Dorsolateral prefrontal cortex (tissue), 120 donors: ENCODE measurements at regions of chr2 and their contacts with region 1.

Region 1: DNA sequence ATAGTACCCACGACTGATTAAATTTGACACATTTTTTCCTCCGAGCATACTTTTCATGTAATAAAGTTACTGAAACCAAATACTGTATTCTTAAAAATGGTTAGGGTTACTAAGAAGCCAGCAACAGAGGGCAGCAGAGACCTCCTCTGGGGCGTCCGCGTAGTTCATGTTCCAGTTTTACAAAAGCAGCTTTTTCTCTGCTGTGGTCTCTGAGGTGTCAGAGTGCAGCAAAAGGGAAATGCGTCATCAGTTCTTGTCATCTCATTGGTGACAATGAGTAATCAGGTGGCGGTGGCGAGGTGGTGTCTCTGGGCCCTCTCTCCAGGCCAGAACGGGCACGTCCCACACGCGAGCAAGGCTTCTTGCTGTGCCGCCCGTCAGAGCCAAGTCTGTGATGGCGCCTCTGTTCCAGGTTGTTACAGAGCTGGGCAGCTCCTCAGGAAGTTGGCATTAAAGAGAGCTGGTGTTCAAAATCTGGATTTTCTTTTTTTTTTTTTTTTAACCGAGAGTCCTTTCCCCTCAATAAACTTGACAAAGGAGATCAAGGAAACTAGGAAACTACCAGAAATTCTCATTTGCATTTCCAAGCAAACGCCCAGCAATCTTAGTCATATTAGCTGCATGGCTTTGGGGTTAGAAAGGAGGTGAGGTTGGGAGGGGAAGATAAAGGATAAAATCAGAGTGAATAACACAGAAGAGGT is 98.6 kb upstream of the BZW1 start:
- DNase-seq: peak; percentile 55 to 92 (median 86)
- H3K4me3 ChIP-seq: peak overlapping the region; percentile 23 to 70 (median 52)
- H3K27ac ChIP-seq: peak overlapping the region; percentile 47 to 97 (median 88)
- H3K27me3 ChIP-seq: no peaks in the 10 kb centered on the region
- CTCF ChIP-seq: peak; percentile 81 to 98 (median 91)

Region 2: GRCh38 chr2:200525882-200526651 is 187.1 kb before region 1 on chr2 and contains the start of gene SGO2:
- intact Hi-C with region 1: loop called (anchors 10 kb)
- DNase-seq: peak; percentile 87 to 97 (median 95)
- H3K4me3 ChIP-seq: peak within 1 kb of the TSS; percentile 66 to 100 (median 84)
- H3K27ac ChIP-seq: peak within 1 kb of the TSS in 44 of 59 donors; percentile 0 to 84 (median 62)
- H3K27me3 ChIP-seq: no peaks in the 10 kb centered on the region
- CTCF ChIP-seq: peak in 37 of 56 donors; percentile 7 to 59 (median 30)
- total RNA-seq, gene SGO2: 1.7 to 6.1 (median 3.1) TPM

Region 3: GRCh38 chr2:200677721-200678585 is 35.2 kb before region 1 on chr2:
- intact Hi-C with region 1: no loop called
- DNase-seq: no peak
- H3K4me3 ChIP-seq: no peak overlapping the region
- H3K27ac ChIP-seq: peak overlapping the region in 2 of 59 donors; percentile 1 to 10
- H3K27me3 ChIP-seq: no peaks in the 10 kb centered on the region
- CTCF ChIP-seq: no peak

Region 4: DNA sequence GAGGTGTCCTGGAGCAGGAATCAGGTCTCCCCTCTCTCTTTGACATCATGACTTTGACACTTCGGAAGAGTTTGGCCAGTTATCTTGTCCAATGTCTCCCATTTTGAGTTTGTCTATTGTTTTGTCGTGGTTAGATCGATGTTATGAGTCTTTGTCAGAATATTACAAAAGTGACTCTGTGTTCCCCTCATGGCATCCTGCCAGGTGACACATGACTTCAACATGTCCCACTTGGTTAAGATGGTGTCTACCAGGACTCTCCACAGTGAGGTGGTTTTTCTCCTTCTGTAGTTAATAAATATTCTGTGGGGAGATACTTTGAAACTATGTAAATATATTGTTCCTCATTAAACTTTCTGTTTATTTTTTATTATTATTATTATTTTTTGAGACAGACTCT is 21.9 kb after region 1 on chr2:
- intact Hi-C with region 1: loop called in 1 of 2 experiments (anchors 1 kb)
- DNase-seq: peak in 8 of 10 donors; percentile 52 to 91 (median 70)
- H3K4me3 ChIP-seq: peak overlapping the region in 54 of 59 donors; percentile 0 to 65 (median 39)
- H3K27ac ChIP-seq: peak overlapping the region in 58 of 59 donors; percentile 9 to 94 (median 80)
- H3K27me3 ChIP-seq: peaks cover 0 to 4% (median 0%) of the 10 kb centered on the region in 45 donors
- CTCF ChIP-seq: no peak

Region 5: DNA sequence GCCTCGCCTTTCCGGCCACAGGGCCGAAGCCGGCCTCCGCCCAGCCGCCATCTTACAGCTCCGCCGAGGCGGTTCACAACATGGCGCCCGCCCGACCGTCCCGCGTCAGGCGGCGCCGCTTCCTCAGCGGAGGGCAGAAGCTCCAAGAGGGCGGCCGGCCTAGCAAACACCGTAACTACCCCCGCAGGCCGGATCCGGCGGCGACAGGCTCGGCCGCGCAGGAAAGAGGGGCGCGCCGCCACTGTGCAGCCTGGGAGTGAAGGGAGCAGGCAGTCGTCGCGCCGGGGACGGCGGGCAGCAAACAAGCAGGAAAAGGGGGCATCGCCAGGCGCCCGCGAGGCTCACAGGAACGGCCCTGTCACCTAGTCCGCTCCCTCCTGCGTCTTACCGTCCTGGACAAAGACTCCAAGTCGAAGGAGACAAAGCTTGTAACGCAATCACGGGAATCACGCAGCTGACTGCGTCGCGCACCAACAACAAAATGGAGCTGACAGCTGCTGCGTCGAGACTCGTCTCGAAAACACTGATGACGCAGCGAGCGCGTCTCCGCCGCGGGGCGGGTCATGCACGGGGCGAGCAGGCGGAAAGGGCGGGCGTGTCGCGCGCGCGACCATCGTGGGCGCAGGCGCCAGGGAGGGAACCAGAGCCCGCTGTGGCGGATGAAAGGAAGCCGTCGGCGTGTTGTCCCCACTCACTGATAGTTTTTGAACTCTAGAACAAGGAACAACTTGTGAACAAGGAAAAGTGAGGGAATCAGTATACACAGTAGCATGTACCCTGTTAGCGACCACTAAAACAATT is 151.2 kb after region 1 on chr2 and contains the start of gene CLK1:
- intact Hi-C with region 1: loop called (anchors 5 to 10 kb)
- DNase-seq: peak; percentile 93 to 97 (median 95)
- H3K4me3 ChIP-seq: peak within 1 kb of the TSS; percentile 51 to 100 (median 94)
- H3K27ac ChIP-seq: peak within 1 kb of the TSS; percentile 99 to 100 (median 100)
- H3K27me3 ChIP-seq: no peaks in the 10 kb centered on the region
- CTCF ChIP-seq: peak in 12 of 56 donors; percentile 4 to 42 (median 12)
- total RNA-seq, gene CLK1: 115 to 437 (median 174) TPM